ENCODE measurements at regions of chr6 and their contacts with region 1.

Region 1: GRCh38 chr6:146253691-146254090 is 224.8 kb downstream of the GRM1 start:
- DNase-seq: no peak
- H3K4me3 ChIP-seq: no peak overlapping the region
- CTCF ChIP-seq: no peak

Region 2: GRCh38 chr6:146219101-146219500 is 34.6 kb before region 1 on chr6:
- in situ Hi-C with region 1: loop called (anchors 5 kb)
- DNase-seq: no peak
- H3K4me3 ChIP-seq: no peak overlapping the region
- CTCF ChIP-seq: no peak